ENCODE measurements at regions of chr3 and their contacts with region 1.

Region 1: DNA sequence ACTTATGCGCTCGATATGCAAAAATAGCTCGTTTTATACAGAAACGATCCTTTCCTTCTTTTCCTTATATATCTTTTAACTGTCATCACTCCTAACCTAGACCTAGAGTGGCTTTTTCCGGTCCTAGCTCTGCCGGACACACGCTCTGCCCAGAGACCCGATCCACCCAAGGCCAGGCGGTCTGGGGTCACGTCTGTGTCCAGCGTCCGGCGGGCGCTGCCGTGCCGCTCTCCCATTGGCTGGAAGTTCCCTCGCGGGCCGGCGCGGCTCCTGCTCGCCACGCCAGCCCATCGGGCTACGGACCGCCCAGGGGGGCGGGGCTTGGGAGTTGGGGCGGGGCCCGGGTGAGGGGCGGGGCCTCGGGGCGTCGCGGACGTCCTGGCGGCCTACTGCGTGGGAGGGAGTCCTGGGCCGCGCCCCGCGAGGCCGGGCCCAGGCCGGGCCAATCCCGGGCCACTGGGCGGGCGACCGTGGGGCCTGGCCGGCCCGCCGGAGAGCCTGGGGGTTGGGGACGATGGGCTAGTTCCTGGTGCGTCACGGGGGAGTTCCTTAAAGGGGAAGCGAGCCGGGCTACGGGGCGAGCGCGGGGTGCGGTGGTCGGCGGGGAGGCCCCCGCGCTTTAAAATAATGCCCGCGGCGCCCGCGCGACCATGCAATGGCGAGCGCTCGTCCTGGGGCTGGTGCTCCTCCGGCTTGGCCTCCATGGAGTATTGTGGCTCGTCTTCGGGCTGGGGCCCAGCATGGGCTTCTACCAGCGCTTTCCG is at the start of gene EDEM1:
- DNase-seq: peak; percentile 98
- H3K4me3 ChIP-seq: peak within 1 kb of the TSS; percentile 79 to 99 (median 84)
- H3K27ac ChIP-seq: peak within 1 kb of the TSS; percentile 85 to 98 (median 95)
- H3K4me1 ChIP-seq: peaks cover 24 to 53% (median 37%) of the 10 kb centered on the region in 4 donors
- H3K27me3 ChIP-seq: no peaks in the 10 kb centered on the region
- CTCF ChIP-seq: peak in 1 of 3 experiments; percentile 9
- EP300 ChIP-seq: no peak
- POLR2A ChIP-seq: peak; percentile 72
- total RNA-seq, gene EDEM1: 16.6 to 23.3 (median 19.3) TPM

Region 2: DNA sequence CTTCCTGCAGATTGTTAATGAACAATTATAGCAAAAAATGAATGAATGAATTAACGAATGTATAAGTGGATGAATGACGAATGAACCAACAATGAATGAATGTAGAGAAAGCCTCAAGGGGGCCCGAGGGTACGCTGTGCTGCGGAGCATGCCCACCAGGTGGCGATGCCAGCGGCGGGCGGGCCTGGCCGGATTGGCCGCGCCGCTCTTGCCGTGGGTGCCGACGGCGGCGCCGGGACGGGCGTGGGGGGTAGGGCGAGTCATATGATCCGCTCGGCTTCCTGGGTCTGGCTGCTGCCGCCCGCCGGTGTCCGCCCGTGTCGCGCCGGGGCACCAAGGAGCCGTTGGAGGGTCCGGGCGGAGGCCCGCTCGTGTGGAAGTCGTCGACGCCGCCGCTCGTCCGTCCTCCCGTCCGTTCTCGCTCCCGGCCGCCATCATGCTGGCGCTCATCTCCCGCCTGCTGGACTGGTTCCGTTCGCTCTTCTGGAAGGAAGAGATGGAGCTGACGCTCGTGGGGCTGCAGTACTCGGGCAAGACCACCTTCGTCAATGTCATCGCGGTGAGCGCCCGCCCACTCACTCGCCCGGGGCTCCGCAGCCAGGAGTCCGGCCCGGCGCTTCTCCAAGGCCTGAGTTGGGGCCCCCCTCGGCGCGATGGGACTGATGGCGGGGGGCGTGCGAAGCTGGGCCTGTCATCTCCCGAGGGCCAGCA is 65.2 kb before region 1 on chr3 and contains the start of gene ARL8B:
- intact Hi-C with region 1: loop called (anchors 5 kb)
- DNase-seq: peak; percentile 96
- H3K4me3 ChIP-seq: peak within 1 kb of the TSS; percentile 74 to 98 (median 90)
- H3K27ac ChIP-seq: peak within 1 kb of the TSS; percentile 90 to 95 (median 93)
- H3K4me1 ChIP-seq: peaks cover 37 to 49% (median 47%) of the 10 kb centered on the region in 4 donors
- H3K27me3 ChIP-seq: no peaks in the 10 kb centered on the region
- CTCF ChIP-seq: peak; percentile 96 to 98 (median 97)
- EP300 ChIP-seq: no peak
- POLR2A ChIP-seq: peak; percentile 68
- total RNA-seq, gene ARL8B: 40.6 to 47.1 (median 43.8) TPM

Measured in esophagus muscularis mucosa (tissue), 4 donors.